ENCODE measurements at regions of chr2 and their contacts with region 1.

Region 1: GRCh38 chr2:222982010-222982908 is 69.7 kb upstream of the KCNE4 start:
- DNase-seq: peak; percentile 67 to 90
- H3K4me3 ChIP-seq: no peak overlapping the region
- H3K27ac ChIP-seq: peak overlapping the region; percentile 62
- H3K4me1 ChIP-seq: peaks cover 22% of the 10 kb centered on the region
- H3K27me3 ChIP-seq: no peaks in the 10 kb centered on the region
- CTCF ChIP-seq: peak; percentile 79

Region 2: DNA sequence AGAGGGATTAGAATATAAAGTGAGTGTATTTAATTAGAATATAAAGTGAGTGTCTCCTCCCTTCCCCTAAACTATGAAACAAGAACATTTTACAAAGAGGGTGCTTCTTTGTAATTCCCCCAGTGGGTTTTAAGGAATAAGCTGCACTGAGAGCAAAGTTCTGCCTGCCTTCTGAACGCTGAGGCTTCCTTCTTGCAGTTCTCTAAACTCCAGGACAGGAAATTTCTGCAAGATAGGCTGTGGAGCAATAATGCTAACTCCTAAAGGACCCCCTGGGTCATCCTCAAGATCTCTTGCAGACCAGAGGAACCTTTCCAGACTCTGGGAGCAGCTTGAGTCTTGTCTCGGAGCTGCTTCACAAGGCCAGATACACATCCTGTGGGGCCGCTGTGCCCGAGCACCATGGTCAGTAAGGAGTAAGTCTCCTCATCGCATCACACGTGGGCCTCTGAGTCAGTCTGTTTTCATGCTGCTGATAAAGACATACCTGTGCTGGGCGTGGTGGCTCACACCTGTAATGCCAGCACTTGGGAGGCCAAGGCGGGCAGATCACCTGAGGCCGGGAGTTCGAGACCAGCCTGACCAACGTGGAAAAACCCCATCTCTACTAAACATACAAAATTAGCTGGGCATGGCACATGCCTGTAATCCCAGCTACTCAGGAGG is 17.8 kb before region 1 on chr2:
- CTCF ChIA-PET with region 1: no interaction called
- POLR2A ChIA-PET with region 1: no interaction called
- intact Hi-C with region 1: no loop called
- DNase-seq: no peak
- H3K4me3 ChIP-seq: no peak overlapping the region
- H3K27ac ChIP-seq: no peak overlapping the region
- H3K4me1 ChIP-seq: peaks cover 6% of the 10 kb centered on the region
- H3K27me3 ChIP-seq: no peaks in the 10 kb centered on the region
- CTCF ChIP-seq: no peak

Region 3: GRCh38 chr2:223041527-223042109 is 59.4 kb after region 1 on chr2:
- CTCF ChIA-PET with region 1: no interaction called
- POLR2A ChIA-PET with region 1: interaction called, 6 read pairs
- intact Hi-C with region 1: loop called (anchors 5 kb)
- DNase-seq: peak; percentile 90 to 92
- H3K4me3 ChIP-seq: peak overlapping the region; percentile 2; the same call in 1 of the 2 replicates
- H3K27ac ChIP-seq: peak overlapping the region; percentile 88
- H3K4me1 ChIP-seq: peaks cover 40% of the 10 kb centered on the region
- H3K27me3 ChIP-seq: no peaks in the 10 kb centered on the region
- CTCF ChIP-seq: no peak

Region 4: GRCh38 chr2:223101340-223102039 is 119.2 kb after region 1 on chr2:
- CTCF ChIA-PET with region 1: interaction called, 3 read pairs
- POLR2A ChIA-PET with region 1: no interaction called
- intact Hi-C with region 1: loop called (anchors 1 kb)
- DNase-seq: peak in 1 of 2 experiments; percentile 51
- H3K4me3 ChIP-seq: no peak overlapping the region
- H3K27ac ChIP-seq: no peak overlapping the region
- H3K4me1 ChIP-seq: peaks cover 5% of the 10 kb centered on the region; the same call in 1 of the 2 replicates
- H3K27me3 ChIP-seq: no peaks in the 10 kb centered on the region
- CTCF ChIP-seq: peak; percentile 86

Region 5: GRCh38 chr2:223247136-223247535 is 264.9 kb after region 1 on chr2:
- CTCF ChIA-PET with region 1: no interaction called
- POLR2A ChIA-PET with region 1: no interaction called
- intact Hi-C with region 1: loop called (anchors 1 kb)
- DNase-seq: peak in 1 of 2 experiments; percentile 47
- H3K4me3 ChIP-seq: no peak overlapping the region
- H3K27ac ChIP-seq: no peak overlapping the region
- H3K4me1 ChIP-seq: no peaks in the 10 kb centered on the region
- H3K27me3 ChIP-seq: no peaks in the 10 kb centered on the region
- CTCF ChIP-seq: peak; percentile 93

Measured in PC-9 (cell line).